CD4-positive, alpha-beta memory T cell (primary cell): ENCODE measurements at regions of chr15 and their contacts with region 1.

Region 1: GRCh38 chr15:90902040-90902839 is 862 bp upstream of the MAN2A2 start:
- DNase-seq: peak; percentile 73 to 79 (median 75)
- H3K4me3 ChIP-seq: peak overlapping the region; percentile 61 to 80
- H3K4me3 Mint-ChIP-seq: peak overlapping the region; percentile 76 to 95 (median 92)
- H3K27ac ChIP-seq: peak overlapping the region; percentile 68
- H3K27ac Mint-ChIP-seq: peak overlapping the region; percentile 85 to 96 (median 94)
- H3K4me1 ChIP-seq: peaks cover 16% of the 10 kb centered on the region
- H3K4me1 Mint-ChIP-seq: peaks cover 10 to 38% (median 26%) of the 10 kb centered on the region in 4 donors
- H3K27me3 ChIP-seq: no peaks in the 10 kb centered on the region
- H3K27me3 Mint-ChIP-seq: no peaks in the 10 kb centered on the region

Region 2: GRCh38 chr15:90869601-90870353 is 32.5 kb before region 1 on chr15:
- CTCF ChIA-PET with region 1: no interaction called
- POLR2A ChIA-PET with region 1: interaction called, 12 read pairs
- intact Hi-C with region 1: no loop called
- DNase-seq: peak in 1 of 5 donors; percentile 69
- H3K4me3 ChIP-seq: peak overlapping the region in 1 of 2 donors; percentile 42
- H3K4me3 Mint-ChIP-seq: peak overlapping the region; percentile 84 to 96 (median 88)
- H3K27ac ChIP-seq: peak overlapping the region; percentile 68
- H3K27ac Mint-ChIP-seq: peak overlapping the region; percentile 92 to 98 (median 94)
- H3K4me1 ChIP-seq: peaks cover 46% of the 10 kb centered on the region
- H3K4me1 Mint-ChIP-seq: peaks cover 23 to 65% (median 40%) of the 10 kb centered on the region in 4 donors
- H3K27me3 ChIP-seq: no peaks in the 10 kb centered on the region
- H3K27me3 Mint-ChIP-seq: no peaks in the 10 kb centered on the region

Region 3: DNA sequence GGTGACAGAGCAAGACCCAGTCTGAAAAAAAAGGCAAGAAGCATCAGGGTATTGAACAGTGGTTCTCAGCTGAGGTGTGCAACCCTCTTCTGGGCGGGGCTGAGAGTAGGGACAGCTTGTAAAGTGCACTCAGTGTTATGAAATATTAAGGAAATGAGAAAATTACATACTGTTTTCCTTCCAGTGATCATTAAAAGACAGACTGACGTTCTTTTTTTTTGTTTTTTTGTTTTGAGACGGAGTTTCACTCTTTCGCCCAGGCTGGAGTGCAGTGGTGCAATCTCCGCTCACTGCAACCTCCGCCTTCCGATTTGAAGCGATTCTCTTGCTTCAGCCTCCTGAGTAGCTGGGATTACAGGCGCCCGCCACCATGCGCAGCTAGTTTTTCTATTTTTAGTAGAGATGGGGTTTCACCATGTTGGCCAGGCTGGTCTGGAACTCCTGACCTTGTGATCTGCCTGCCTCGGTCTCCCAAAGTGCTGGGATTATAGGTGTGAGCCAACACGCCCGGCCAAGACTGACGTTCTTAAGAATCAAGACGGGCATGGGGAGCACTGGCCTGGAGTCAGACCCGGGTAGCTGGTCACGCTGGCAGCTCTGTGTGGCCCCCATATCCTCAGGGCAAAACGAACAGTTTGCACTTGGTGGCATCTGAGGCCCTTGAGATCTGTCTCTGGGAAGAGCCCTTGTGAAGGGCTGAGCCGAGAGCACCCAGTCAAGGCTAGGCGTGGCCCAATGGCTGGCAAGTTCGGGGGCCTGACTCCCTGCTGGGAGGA is 12.3 kb after region 1 on chr15:
- CTCF ChIA-PET with region 1: interaction called, 3 read pairs
- POLR2A ChIA-PET with region 1: interaction called, 11 read pairs
- intact Hi-C with region 1: no loop called
- DNase-seq: no peak
- H3K4me3 ChIP-seq: no peak overlapping the region
- H3K4me3 Mint-ChIP-seq: no peak overlapping the region
- H3K27ac ChIP-seq: no peak overlapping the region
- H3K27ac Mint-ChIP-seq: peak overlapping the region in 2 of 7 donors; percentile 46 to 57
- H3K4me1 ChIP-seq: no peaks in the 10 kb centered on the region
- H3K4me1 Mint-ChIP-seq: no peaks in the 10 kb centered on the region
- H3K27me3 ChIP-seq: no peaks in the 10 kb centered on the region
- H3K27me3 Mint-ChIP-seq: no peaks in the 10 kb centered on the region

Region 4: GRCh38 chr15:90994417-90995311 is 92.4 kb after region 1 on chr15 and contains the start of gene PRC1:
- CTCF ChIA-PET with region 1: no interaction called
- POLR2A ChIA-PET with region 1: no interaction called
- intact Hi-C with region 1: no loop called
- DNase-seq: peak; percentile 96 to 98 (median 97)
- H3K4me3 ChIP-seq: peak within 1 kb of the TSS; percentile 73 to 90
- H3K4me3 Mint-ChIP-seq: peak within 1 kb of the TSS; percentile 98 to 100 (median 99)
- H3K27ac ChIP-seq: peak within 1 kb of the TSS; percentile 88
- H3K27ac Mint-ChIP-seq: peak within 1 kb of the TSS; percentile 79 to 99 (median 99)
- H3K4me1 ChIP-seq: peaks cover 9% of the 10 kb centered on the region
- H3K4me1 Mint-ChIP-seq: peaks cover 7 to 32% (median 21%) of the 10 kb centered on the region in 4 donors
- H3K27me3 ChIP-seq: no peaks in the 10 kb centered on the region
- H3K27me3 Mint-ChIP-seq: no peaks in the 10 kb centered on the region
- total RNA-seq, gene PRC1: 8.1 to 8.6 TPM

Region 5: DNA sequence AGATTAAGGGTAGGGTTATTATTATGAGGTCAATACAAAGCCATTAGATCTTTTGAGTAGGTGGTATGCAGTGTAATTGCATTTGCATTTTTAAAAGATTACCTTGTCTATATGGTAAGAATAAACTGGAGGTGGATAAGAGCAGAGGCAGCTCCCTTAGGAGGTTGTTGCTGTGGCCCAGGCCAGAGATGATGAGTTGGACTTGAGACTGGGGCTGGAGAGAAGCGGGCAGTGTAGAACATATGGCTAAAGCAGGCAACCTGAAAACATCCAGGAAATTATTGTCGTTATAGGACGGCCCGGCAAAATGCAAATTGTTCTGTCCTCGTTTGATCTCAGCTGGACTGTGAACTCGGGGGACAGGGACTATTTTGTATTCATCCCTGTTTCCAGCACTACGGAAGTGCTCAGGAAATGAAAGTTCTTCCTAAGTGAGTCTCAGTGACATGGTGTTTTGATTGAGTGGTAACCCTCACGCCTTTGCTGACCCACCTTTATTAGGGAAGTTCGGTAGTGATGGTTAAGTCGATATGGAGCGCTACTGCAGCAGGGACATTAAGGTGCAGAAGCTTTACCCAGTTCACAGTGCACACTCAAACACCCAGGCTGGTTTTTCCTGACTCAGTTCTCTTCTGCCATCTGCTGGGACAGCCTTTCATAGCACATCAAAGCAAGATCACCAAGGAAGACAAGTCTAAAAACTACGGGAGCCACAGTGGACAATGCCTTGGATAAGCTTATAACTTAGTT is 147.3 kb after region 1 on chr15:
- CTCF ChIA-PET with region 1: interaction called, 13 read pairs
- POLR2A ChIA-PET with region 1: no interaction called
- intact Hi-C with region 1: no loop called
- DNase-seq: peak; percentile 50 to 66 (median 60)
- H3K4me3 ChIP-seq: no peak overlapping the region
- H3K4me3 Mint-ChIP-seq: no peak overlapping the region
- H3K27ac ChIP-seq: no peak overlapping the region
- H3K27ac Mint-ChIP-seq: no peak overlapping the region
- H3K4me1 ChIP-seq: peaks cover 21% of the 10 kb centered on the region
- H3K4me1 Mint-ChIP-seq: peaks cover 11 to 30% (median 26%) of the 10 kb centered on the region in 4 donors
- H3K27me3 ChIP-seq: no peaks in the 10 kb centered on the region
- H3K27me3 Mint-ChIP-seq: peaks cover 8 to 10% of the 10 kb centered on the region in 2 donors